ENCODE measurements at regions of chr7 and their contacts with region 1.

Region 1: DNA sequence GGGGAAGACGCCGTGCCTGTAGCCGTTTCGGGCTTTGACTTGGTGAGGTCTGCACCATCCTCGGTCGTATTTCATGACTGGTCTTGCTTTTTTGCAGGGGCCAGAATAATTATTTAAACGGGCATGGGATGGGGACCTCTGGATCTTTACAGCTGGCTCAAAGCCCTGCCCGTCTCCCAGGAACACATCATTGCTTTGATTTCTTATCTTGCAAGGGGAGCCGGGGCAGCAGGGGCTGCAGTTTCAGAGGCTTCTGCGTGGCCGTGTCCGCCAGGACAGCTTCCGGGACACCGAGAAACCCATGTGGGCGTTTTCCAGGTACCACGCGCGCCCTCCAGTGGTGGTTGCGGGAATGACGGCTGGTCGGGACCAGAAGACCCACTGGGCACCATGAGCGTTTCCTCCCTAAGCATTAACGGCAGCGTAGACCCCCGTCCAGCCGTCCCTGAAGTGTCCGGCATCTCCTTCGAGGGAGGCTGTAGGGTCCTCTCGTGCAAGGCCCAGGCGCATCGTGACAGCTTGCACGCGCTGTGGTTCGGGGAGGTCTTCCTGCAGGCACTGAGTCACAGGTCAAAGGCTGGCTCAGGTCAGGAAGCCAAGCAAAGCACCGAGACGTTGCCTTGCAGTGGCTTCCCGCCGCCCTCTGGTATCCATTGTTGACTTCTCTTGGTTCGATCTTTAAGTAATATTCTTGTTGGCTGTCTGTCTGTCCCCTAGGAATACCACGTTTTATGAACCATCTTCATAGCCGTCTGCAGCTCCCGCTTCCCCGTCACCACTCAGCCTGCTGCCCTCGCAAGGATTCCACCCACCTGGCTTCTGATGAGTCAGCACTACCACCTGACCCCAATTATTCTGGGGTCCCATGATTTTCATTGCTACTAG is 16.2 kb upstream of the ZFAND2A start:
- DNase-seq: peak; percentile 74
- H3K4me3 Mint-ChIP-seq: peak overlapping the region; percentile 17
- H3K27ac Mint-ChIP-seq: peak overlapping the region; percentile 49
- H3K4me1 Mint-ChIP-seq: peaks cover 14% of the 10 kb centered on the region
- H3K27me3 Mint-ChIP-seq: no peaks in the 10 kb centered on the region

Region 2: GRCh38 chr7:1086588-1087464 is 89.4 kb before region 1 on chr7:
- intact Hi-C with region 1: loop called (anchors 1 kb)
- DNase-seq: peak; percentile 68
- H3K4me3 Mint-ChIP-seq: peak overlapping the region; percentile 62
- H3K27ac Mint-ChIP-seq: no peak overlapping the region
- H3K4me1 Mint-ChIP-seq: peaks cover 3% of the 10 kb centered on the region
- H3K27me3 Mint-ChIP-seq: no peaks in the 10 kb centered on the region

Region 3: GRCh38 chr7:1159891-1160668 is 16.1 kb before region 1 on chr7 and contains the start of gene ZFAND2A:
- intact Hi-C with region 1: loop called (anchors 2 kb)
- DNase-seq: peak; percentile 99
- H3K4me3 Mint-ChIP-seq: peak within 1 kb of the TSS; percentile 91
- H3K27ac Mint-ChIP-seq: peak within 1 kb of the TSS; percentile 78
- H3K4me1 Mint-ChIP-seq: peaks cover 16% of the 10 kb centered on the region
- H3K27me3 Mint-ChIP-seq: no peaks in the 10 kb centered on the region
- total RNA-seq, gene ZFAND2A: 20.5 and 21.9 TPM in 2 replicates